Left ventricle myocardium superior (tissue), 1 donor: ENCODE measurements at regions of chr4 and their contacts with region 1.

Region 1: GRCh38 chr4:48578132-48578968 is 88.3 kb downstream of the ZAR1 start:
- DNase-seq: no peak
- ATAC-seq: peak; percentile 89

Region 2: GRCh38 chr4:48445704-48446103 is 132.6 kb before region 1 on chr4:
- intact Hi-C with region 1: no loop called
- DNase-seq: no peak
- ATAC-seq: no peak

Region 3: DNA sequence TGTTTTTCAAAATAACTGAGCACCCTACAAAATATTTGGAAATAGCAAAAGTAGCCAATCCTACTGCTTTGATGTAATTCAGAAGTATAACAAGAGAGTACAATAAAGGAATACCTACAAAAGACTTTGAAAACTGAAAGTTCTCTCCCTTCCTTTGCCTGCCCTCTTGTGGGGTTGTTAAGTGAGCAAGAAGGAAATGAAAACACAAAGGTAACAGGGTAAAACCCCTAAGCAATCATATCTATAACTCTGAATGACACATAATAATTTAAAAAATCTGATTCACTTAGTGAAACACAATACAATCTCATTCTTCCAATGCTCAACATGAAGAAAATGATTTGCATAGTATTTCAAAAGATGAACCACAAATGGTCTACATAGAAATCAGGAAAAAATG is 103.5 kb after region 1 on chr4:
- intact Hi-C with region 1: loop called (anchors 5 kb)
- DNase-seq: no peak
- ATAC-seq: no peak

Region 4: DNA sequence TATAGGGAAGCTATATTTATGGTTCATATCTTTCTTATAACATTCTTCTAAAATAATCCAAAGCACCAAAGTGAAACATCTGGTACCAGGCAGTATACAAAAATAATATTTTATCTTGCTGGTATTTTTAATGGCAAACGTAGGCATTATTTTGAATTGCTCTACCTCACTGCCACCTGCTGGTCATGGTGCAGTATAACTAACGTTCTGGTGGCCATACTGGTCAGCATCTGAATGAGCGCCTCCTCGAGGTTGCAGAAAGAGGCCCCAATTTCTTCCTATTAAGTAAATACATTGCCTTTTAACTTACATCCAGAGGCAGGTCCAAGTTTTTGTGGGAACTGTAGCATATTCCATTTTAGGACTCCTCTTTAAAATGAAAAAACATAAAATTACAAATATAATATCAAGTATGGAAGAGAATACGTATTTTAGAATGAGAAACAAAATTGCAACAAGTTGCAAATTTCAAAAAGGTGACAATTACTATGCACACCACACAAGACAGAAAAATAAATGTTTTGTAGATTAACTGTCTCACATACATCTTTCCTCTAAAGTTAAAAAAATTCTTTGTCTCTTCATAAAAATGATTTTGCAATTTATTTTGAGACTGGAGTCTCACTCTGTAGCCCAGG is 384.8 kb after region 1 on chr4:
- intact Hi-C with region 1: loop called (anchors 2 kb)
- DNase-seq: peak; percentile 52
- ATAC-seq: peak; percentile 75